CD8-positive, alpha-beta T cell (primary cell): ENCODE measurements at regions of chr2 and their contacts with region 1.

Region 1: DNA sequence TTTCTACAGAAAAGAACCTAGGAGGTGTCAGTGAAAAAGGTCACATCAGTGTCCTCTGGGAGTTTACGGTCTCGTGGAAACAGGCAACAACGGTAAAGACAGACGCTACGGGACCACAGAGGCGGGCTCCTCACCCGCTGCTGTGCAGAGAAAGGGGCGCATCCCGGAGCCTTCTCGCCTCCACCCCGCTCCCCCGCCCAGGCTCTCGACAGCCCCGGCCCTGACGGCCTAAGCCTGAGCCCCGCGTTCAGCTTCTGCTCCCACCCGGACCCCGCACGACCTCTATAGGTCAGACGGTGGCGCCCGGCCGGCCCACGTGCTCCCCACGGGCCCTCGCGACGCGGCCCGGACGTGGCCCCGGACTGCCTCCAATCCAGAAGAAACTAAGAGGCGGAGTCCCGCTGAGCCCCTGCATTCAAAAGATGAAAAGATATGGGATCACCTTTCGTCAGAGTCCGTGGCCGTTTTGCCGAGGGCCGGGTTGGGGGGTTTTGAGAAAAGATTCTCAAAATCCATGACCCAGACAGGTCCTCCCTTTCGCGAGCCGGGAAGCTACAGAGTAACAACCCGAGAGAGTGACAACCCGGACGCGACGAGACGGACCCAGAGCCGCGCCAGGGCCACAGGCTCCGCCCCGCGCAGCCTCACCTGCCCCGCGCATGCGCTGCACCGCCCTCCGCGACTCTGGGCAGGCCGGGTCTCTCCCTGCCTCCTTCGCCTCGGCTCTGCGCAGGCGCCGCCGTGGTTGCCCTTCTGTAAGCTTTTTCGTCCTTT is at the start of gene ZC3H8:
- DNase-seq: peak; percentile 90 to 98 (median 96)
- ATAC-seq: peak; percentile 91
- H3K4me3 ChIP-seq: peak within 1 kb of the TSS; percentile 61 to 74
- H3K4me3 Mint-ChIP-seq: peak within 1 kb of the TSS; percentile 88
- H3K27ac ChIP-seq: peak within 1 kb of the TSS; percentile 87 to 95
- H3K27ac Mint-ChIP-seq: peak within 1 kb of the TSS; percentile 93
- H3K4me1 ChIP-seq: peaks cover 26% of the 10 kb centered on the region
- H3K4me1 Mint-ChIP-seq: peaks cover 19% of the 10 kb centered on the region
- H3K27me3 ChIP-seq: no peaks in the 10 kb centered on the region
- H3K27me3 Mint-ChIP-seq: no peaks in the 10 kb centered on the region
- CTCF ChIP-seq: no peak
- total RNA-seq, gene ZC3H8: 11.1 to 11.7 TPM

Region 2: DNA sequence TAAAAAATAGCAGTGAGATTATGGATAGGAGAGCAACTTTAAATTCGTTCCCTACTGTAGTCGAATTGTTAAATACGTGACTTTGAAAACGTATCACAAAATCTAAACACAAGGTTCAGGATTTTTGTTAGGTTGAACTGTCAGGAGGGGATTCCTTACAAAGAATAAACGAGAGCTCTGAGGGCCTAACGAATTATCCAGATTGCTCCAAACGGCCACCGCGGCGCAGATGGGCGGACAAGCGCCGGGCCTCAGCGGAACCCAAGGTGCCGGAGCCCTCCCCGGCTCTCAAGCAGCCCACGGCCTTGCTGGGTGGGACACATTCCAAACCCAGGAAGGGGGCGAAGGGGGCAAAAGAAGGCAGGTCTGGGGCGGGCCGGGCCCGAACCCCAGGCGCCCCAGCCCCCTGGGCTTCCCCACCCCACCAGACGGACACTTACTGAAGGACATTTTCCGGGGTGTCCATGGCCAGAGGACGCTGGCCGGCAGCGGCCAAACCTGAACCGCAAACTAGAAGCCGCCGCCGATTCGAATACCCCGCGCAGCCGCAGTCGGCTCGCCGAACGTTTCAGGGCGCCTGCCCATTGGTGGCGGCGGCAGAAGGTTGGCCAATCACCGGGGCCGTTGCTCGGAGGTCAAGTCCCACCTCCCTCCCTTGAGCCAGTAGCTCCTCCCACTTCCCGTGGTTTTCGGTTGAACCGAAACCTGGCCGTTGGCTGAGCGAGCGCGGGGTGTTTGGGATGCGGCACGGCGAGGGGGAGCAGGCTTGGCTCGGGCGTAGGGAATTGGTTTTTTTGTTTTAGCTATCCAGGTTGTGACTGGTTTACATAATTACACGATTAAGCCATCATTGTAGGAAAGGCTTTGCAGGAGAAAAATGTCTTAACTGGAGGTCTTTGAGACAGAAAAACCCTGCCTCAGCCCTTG is 1576.9 kb before region 1 on chr2 and contains the start of gene BUB1:
- CTCF ChIA-PET with region 1: no interaction called
- POLR2A ChIA-PET with region 1: no interaction called
- intact Hi-C with region 1: loop called in 1 of 2 experiments (anchors 10 kb)
- DNase-seq: peak; percentile 87 to 98 (median 95)
- ATAC-seq: peak; percentile 95
- H3K4me3 ChIP-seq: peak within 1 kb of the TSS; percentile 65 to 91
- H3K4me3 Mint-ChIP-seq: peak within 1 kb of the TSS; percentile 96
- H3K27ac ChIP-seq: peak within 1 kb of the TSS; percentile 66 to 67
- H3K27ac Mint-ChIP-seq: peak within 1 kb of the TSS; percentile 93
- H3K4me1 ChIP-seq: peaks cover 13% of the 10 kb centered on the region
- H3K4me1 Mint-ChIP-seq: peaks cover 27% of the 10 kb centered on the region
- H3K27me3 ChIP-seq: peaks cover 0 to 2% of the 10 kb centered on the region in 2 experiments
- H3K27me3 Mint-ChIP-seq: no peaks in the 10 kb centered on the region
- CTCF ChIP-seq: no peak
- total RNA-seq, gene BUB1: 2.4 to 3.1 TPM

Region 3: DNA sequence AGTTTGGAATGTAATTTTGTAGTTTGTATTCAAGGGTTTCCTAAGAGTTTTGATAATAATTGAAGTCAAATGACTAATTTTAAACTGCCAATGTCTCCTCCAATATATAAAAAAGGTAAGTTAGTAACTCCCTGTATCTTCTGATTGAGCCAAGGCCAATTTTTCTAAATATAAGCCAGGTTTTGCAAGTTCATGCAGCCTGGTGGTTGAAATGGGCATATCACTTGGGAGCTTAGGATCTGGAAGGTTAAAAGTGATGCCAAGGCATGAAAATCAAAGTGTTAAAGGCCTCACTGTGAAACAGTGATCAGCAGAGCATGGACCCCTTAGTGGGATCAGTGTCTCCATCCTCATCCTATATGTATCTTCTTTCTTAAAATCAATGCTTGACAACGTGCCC is 295.8 kb before region 1 on chr2:
- CTCF ChIA-PET with region 1: no interaction called
- POLR2A ChIA-PET with region 1: no interaction called
- intact Hi-C with region 1: no loop called
- DNase-seq: no peak
- ATAC-seq: no peak
- H3K4me3 ChIP-seq: no peak overlapping the region
- H3K4me3 Mint-ChIP-seq: no peak overlapping the region
- H3K27ac ChIP-seq: no peak overlapping the region
- H3K27ac Mint-ChIP-seq: no peak overlapping the region
- H3K4me1 ChIP-seq: no peaks in the 10 kb centered on the region
- H3K4me1 Mint-ChIP-seq: no peaks in the 10 kb centered on the region
- H3K27me3 ChIP-seq: no peaks in the 10 kb centered on the region
- H3K27me3 Mint-ChIP-seq: peaks cover 4% of the 10 kb centered on the region
- CTCF ChIP-seq: no peak

Region 4: GRCh38 chr2:112187805-112188596 is 66.7 kb before region 1 on chr2:
- CTCF ChIA-PET with region 1: no interaction called
- POLR2A ChIA-PET with region 1: interaction called, 3 read pairs
- intact Hi-C with region 1: loop called (anchors 1 to 2 kb)
- DNase-seq: peak; percentile 30 to 85 (median 77)
- ATAC-seq: peak; percentile 82
- H3K4me3 ChIP-seq: peak overlapping the region; percentile 16 to 23
- H3K4me3 Mint-ChIP-seq: peak overlapping the region; percentile 59
- H3K27ac ChIP-seq: peak overlapping the region; percentile 72 to 94
- H3K27ac Mint-ChIP-seq: peak overlapping the region; percentile 100
- H3K4me1 ChIP-seq: peaks cover 31% of the 10 kb centered on the region
- H3K4me1 Mint-ChIP-seq: peaks cover 63% of the 10 kb centered on the region
- H3K27me3 ChIP-seq: no peaks in the 10 kb centered on the region
- H3K27me3 Mint-ChIP-seq: no peaks in the 10 kb centered on the region
- CTCF ChIP-seq: no peak

Region 5: GRCh38 chr2:112242384-112242783 is 12.3 kb before region 1 on chr2:
- CTCF ChIA-PET with region 1: interaction called, 17 read pairs
- POLR2A ChIA-PET with region 1: no interaction called
- intact Hi-C with region 1: no loop called
- DNase-seq: no peak
- ATAC-seq: peak; percentile 42
- H3K4me3 ChIP-seq: no peak overlapping the region
- H3K4me3 Mint-ChIP-seq: no peak overlapping the region
- H3K27ac ChIP-seq: no peak overlapping the region
- H3K27ac Mint-ChIP-seq: peak overlapping the region; percentile 62
- H3K4me1 ChIP-seq: peaks cover 14% of the 10 kb centered on the region
- H3K4me1 Mint-ChIP-seq: peaks cover 32% of the 10 kb centered on the region
- H3K27me3 ChIP-seq: no peaks in the 10 kb centered on the region
- H3K27me3 Mint-ChIP-seq: no peaks in the 10 kb centered on the region
- CTCF ChIP-seq: no peak

Region 6: DNA sequence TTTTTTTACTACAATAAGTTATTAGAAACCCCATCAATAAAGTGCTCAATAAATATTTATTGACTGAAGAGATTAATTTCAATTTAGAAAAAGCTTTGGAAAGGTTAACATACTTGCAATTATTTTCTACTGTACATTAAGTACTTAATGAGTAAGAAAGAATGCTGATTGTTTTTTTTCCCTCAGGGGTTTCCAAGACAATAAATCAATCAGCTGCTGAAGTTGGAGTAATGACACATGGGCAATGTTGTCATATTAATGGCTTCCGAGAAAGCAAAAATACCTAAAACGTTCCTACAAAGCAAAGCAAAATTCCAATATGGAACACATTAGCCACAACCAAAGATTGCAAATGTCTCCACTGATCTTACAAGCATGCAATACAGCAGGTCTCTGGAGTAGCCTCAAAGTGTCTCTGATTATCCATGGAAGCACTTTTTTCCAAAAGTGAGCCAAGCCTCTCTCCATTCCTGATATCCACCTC is 87.5 kb after region 1 on chr2:
- CTCF ChIA-PET with region 1: no interaction called
- POLR2A ChIA-PET with region 1: no interaction called
- intact Hi-C with region 1: no loop called
- DNase-seq: no peak
- ATAC-seq: no peak
- H3K4me3 ChIP-seq: no peak overlapping the region
- H3K4me3 Mint-ChIP-seq: no peak overlapping the region
- H3K27ac ChIP-seq: no peak overlapping the region
- H3K27ac Mint-ChIP-seq: no peak overlapping the region
- H3K4me1 ChIP-seq: no peaks in the 10 kb centered on the region
- H3K4me1 Mint-ChIP-seq: no peaks in the 10 kb centered on the region
- H3K27me3 ChIP-seq: no peaks in the 10 kb centered on the region
- H3K27me3 Mint-ChIP-seq: no peaks in the 10 kb centered on the region
- CTCF ChIP-seq: no peak

Region 7: DNA sequence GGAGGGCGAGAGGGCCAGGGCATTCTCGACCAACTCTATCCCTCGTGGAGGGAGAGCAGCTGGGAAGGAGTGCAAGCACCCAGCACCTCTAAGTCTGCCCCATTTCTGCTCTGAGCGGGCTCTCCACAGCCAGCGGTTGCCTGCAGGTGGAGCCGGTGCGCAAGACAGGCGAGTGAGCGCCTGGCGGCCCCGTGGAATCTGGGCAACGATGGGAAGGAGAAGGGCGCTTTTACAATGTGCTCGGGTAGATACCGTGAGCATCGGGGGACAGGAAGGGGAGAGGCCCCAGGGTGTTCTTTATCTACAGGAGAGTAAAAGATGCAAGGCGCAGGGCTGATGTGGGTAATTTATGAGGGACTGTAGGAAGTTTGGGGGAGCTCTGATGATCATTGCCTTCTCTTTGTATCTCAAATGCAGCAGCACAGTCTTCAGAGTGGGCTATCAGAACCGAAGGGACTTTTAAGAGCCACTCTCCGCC is 226.4 kb after region 1 on chr2:
- CTCF ChIA-PET with region 1: no interaction called
- POLR2A ChIA-PET with region 1: no interaction called
- intact Hi-C with region 1: loop called in 1 of 2 experiments (anchors 1 kb)
- DNase-seq: peak; percentile 63 to 90 (median 84)
- ATAC-seq: peak; percentile 78
- H3K4me3 ChIP-seq: peak overlapping the region; percentile 56 to 87
- H3K4me3 Mint-ChIP-seq: peak overlapping the region; percentile 95
- H3K27ac ChIP-seq: peak overlapping the region; percentile 30 to 53
- H3K27ac Mint-ChIP-seq: peak overlapping the region; percentile 93
- H3K4me1 ChIP-seq: peaks cover 16% of the 10 kb centered on the region
- H3K4me1 Mint-ChIP-seq: peaks cover 21% of the 10 kb centered on the region
- H3K27me3 ChIP-seq: no peaks in the 10 kb centered on the region
- H3K27me3 Mint-ChIP-seq: no peaks in the 10 kb centered on the region
- CTCF ChIP-seq: peak; percentile 76

Region 8: DNA sequence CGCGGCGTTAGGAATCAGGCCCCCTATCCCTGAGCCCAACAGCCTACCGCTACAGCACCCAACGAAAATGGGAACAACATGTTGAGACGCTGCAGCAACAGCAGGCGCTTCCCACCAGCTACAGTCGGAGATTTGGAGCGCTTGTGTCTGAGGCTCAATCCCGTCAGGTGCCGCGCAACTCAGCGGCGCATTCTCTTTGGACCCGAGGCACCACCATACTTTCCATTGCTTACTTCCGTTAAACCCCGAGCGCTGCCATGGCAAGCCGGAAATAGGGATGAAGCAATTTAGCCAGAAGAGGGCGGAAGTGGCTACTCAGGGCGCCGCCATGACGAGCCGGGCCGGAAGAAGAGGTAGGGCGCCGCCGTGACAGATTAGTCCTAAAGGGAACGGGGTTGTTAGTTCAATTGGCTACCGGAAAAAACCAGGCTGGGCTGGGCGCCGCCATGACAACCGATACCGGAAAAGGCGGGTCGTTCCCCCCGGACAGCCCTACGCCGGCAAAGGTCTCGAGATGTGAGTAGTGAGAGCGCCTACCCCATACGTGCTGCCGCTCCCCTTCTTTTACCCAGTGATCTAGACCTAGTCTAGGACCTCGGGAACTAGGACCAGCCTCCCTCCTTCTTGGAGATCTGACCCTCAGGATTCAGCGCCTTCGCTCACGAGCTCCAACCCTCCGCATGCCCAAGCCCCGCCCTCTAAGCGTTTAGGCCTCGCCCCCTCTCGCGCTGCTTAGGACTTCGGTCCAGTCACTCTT is 329.7 kb after region 1 on chr2 and contains the start of gene CHCHD5:
- CTCF ChIA-PET with region 1: no interaction called
- POLR2A ChIA-PET with region 1: interaction called, 3 read pairs
- intact Hi-C with region 1: loop called (anchors 1 to 5 kb)
- DNase-seq: peak; percentile 85 to 97 (median 92)
- ATAC-seq: peak; percentile 84
- H3K4me3 ChIP-seq: peak within 1 kb of the TSS; percentile 79 to 96
- H3K4me3 Mint-ChIP-seq: peak within 1 kb of the TSS; percentile 95
- H3K27ac ChIP-seq: peak within 1 kb of the TSS; percentile 75 to 95
- H3K27ac Mint-ChIP-seq: peak within 1 kb of the TSS; percentile 94
- H3K4me1 ChIP-seq: peaks cover 24% of the 10 kb centered on the region
- H3K4me1 Mint-ChIP-seq: peaks cover 35% of the 10 kb centered on the region
- H3K27me3 ChIP-seq: no peaks in the 10 kb centered on the region
- H3K27me3 Mint-ChIP-seq: no peaks in the 10 kb centered on the region
- CTCF ChIP-seq: no peak
- total RNA-seq, gene CHCHD5: 12.0 to 15.5 TPM

Region 9: GRCh38 chr2:112972423-112973086 is 717.9 kb after region 1 on chr2:
- CTCF ChIA-PET with region 1: no interaction called
- POLR2A ChIA-PET with region 1: no interaction called
- intact Hi-C with region 1: no loop called
- DNase-seq: no peak
- ATAC-seq: no peak
- H3K4me3 ChIP-seq: no peak overlapping the region
- H3K4me3 Mint-ChIP-seq: no peak overlapping the region
- H3K27ac ChIP-seq: no peak overlapping the region
- H3K27ac Mint-ChIP-seq: no peak overlapping the region
- H3K4me1 ChIP-seq: no peaks in the 10 kb centered on the region
- H3K4me1 Mint-ChIP-seq: peaks cover 10% of the 10 kb centered on the region
- H3K27me3 ChIP-seq: no peaks in the 10 kb centered on the region
- H3K27me3 Mint-ChIP-seq: peaks cover 2% of the 10 kb centered on the region
- CTCF ChIP-seq: no peak